ENCODE measurements at regions of chr16 and their contacts with region 1.

Region 1: GRCh38 chr16:711548-712320 is 3.2 kb upstream of the METRN start:
- DNase-seq: peak; percentile 61 to 82
- ATAC-seq: peak; percentile 58

Region 2: DNA sequence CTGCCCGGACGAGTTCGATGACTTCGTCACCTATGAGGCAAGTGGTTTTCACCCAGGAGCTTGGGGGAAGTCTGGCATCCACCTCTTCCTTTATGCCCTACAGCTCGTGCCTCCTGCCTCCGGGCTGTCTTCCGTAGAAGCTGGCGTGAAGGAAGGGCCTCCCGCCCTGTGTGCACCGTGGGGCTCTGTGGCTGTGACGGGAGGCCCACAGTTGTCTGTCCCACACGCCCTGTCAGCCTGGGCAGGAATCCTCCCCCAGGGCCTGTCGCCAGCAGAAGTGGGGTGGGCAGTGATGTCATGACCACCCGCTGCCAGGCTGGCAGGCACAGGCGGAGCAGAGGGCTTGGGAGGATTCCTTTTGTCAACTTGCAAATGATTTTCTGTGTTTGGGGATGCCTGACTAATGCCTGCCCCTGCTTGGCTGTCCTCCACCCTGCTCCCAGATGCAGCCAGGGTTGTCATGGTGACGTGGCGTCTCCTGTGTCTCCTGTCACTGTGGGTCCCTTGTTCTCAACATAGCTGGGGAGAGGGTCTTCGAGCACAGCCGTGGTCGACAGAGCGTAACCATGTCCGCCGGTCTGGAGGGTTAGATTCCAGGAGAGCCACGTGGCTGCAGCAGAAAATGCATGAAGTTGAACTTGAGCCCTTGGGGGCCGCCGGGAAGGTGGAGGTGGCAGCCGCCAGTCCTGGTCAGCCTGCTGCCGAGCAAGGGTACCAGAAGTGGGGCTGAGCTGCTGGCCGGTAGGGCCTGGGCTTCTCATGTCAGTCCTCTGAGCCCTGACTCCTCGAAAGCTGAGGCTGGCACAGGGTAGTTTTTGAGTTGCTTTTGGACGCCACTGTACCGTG is 240.2 kb before region 1 on chr16:
- intact Hi-C with region 1: no loop called
- DNase-seq: no peak
- ATAC-seq: no peak

Region 3: GRCh38 chr16:754656-755055 is 42.9 kb after region 1 on chr16:
- intact Hi-C with region 1: loop called in 1 of 2 experiments (anchors 10 kb)
- DNase-seq: no peak
- ATAC-seq: peak; percentile 55

Region 4: GRCh38 chr16:785563-786535 is 74.1 kb after region 1 on chr16:
- intact Hi-C with region 1: loop called in 1 of 2 experiments (anchors 2 kb)
- DNase-seq: peak in 1 of 2 donors; percentile 86
- ATAC-seq: peak; percentile 44

Measured in left colon (tissue), 2 donors.